ENCODE measurements at regions of chr19 and their contacts with region 1.

Region 1: DNA sequence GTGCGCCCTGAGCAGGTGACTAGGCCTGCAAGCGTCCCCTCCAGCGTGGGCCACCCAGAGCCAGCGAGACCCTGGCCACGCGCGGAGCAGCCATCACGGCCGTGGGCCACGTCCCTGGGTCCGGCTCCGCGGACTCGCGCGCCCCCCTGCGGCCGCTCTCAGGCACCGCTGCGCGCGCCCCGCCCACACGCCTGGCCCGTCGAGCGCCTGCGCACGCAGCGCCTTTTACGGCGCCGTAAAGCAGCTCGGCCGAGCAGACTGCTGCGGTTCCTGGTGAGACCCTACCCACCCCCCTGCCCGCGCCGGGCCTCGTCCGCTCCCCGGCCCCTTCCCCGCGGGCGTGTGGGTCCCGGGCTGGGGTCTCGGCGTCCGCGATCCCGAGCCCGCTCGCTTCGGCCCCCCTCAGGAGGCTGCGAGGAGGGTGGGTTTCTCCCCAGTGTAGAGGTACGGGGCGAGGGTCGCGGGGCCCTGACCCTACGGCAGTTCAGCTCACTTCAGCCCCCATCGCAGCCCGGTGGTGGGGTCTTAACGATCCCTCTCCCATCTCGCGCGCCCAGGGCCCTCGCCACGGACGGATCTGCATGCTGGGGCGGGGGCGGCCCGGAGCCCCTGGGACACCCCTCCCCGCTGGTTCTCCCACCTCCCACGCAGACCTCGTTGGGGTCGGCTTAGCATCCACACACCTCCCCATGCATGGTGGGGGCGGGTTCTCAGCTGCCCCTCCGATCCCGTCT is at the start of gene TRAPPC5:
- DNase-seq: peak; percentile 88
- ATAC-seq: peak; percentile 38
- H3K4me3 Mint-ChIP-seq: peak within 1 kb of the TSS; percentile 92
- H3K27ac Mint-ChIP-seq: peak within 1 kb of the TSS; percentile 95
- H3K4me1 Mint-ChIP-seq: peaks cover 52% of the 10 kb centered on the region
- H3K27me3 Mint-ChIP-seq: peaks cover 27% of the 10 kb centered on the region
- CTCF ChIP-seq: peak; percentile 99
- total RNA-seq, gene TRAPPC5: 85.0 to 85.9 TPM

Region 2: GRCh38 chr19:7618348-7618747 is 62.4 kb before region 1 on chr19:
- CTCF ChIA-PET with region 1: no interaction called
- POLR2A ChIA-PET with region 1: no interaction called
- intact Hi-C with region 1: no loop called
- DNase-seq: no peak
- ATAC-seq: no peak
- H3K4me3 Mint-ChIP-seq: no peak overlapping the region
- H3K27ac Mint-ChIP-seq: no peak overlapping the region
- H3K4me1 Mint-ChIP-seq: no peaks in the 10 kb centered on the region
- H3K27me3 Mint-ChIP-seq: no peaks in the 10 kb centered on the region
- CTCF ChIP-seq: no peak

Region 3: DNA sequence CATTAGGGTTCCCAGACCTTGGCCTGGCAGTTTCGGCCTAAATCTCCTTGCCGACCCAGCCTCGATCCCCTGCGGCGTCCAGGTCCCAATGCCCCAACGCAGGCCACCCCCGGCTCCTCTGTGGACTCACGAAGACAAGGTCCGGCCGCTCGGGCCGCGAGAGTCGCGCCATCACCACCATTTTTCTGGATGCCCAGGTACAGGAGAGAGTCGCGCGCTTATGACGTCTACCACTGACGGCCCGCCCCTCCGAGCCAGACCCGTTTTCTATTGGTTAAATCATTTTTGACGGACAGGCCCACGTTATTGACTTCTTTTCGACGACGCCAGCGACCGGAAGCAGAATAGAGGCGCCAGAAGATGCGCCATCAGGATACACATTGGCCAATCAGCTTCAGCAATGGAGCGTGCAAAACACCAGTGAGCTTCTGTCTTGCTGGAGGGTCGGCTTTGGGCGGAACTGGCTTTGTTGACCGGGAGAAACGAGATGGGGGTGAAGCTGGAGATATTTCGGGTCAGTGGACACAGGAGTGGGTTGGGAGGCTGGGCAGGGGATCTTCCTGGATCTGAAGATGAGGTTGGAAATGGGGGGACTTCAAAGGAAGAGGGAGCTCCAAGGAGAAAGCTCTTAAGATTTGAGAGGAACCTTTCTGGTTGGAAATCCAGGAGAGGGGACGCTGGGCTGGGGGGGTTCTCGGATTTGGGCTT is 51.3 kb before region 1 on chr19 and contains the starts of genes PET100 and XAB2:
- CTCF ChIA-PET with region 1: interaction called, 18 read pairs
- POLR2A ChIA-PET with region 1: interaction called, 6 read pairs
- intact Hi-C with region 1: no loop called
- DNase-seq: peak; percentile 97
- ATAC-seq: peak; percentile 99
- H3K4me3 Mint-ChIP-seq: peak within 1 kb of the TSS; percentile 83
- H3K27ac Mint-ChIP-seq: peak within 1 kb of the TSS; percentile 93
- H3K4me1 Mint-ChIP-seq: peaks cover 31% of the 10 kb centered on the region
- H3K27me3 Mint-ChIP-seq: no peaks in the 10 kb centered on the region
- CTCF ChIP-seq: no peak
- total RNA-seq, gene PET100: 71.8 to 83.3 TPM
- total RNA-seq, gene XAB2: 50.7 to 54.1 TPM

Region 4: DNA sequence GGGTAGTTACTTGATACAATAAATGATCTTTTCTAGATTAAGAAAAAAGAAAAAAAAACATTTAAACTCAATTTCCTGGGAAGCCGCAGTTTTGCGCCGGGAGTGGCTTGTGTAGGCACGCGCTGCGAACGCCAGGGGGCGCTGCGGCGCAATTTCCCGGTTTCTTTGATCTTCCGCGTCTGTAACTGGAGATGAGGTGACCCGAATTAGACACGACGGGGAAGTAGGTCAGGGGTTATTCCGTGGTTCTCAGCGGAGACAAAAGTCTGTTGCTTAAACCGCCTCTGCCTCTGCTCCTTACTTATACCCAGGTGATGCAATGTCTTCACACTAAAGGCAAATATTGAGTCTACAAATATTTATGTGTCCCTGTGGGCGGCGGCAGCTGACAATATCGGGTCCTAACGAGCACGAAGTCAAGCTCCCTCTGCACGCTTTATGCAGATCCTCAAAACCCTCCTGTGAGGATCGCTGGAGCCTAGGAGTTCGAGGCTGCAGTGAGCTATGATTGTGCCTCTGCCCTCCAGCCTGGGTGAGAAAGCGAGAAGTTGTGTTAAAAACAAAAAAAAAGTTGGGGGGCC is 28.6 kb before region 1 on chr19:
- CTCF ChIA-PET with region 1: interaction called, 74 read pairs
- POLR2A ChIA-PET with region 1: interaction called, 4 read pairs
- intact Hi-C with region 1: no loop called
- DNase-seq: peak; percentile 91
- ATAC-seq: peak; percentile 86
- H3K4me3 Mint-ChIP-seq: peak overlapping the region; percentile 59
- H3K27ac Mint-ChIP-seq: peak overlapping the region; percentile 53
- H3K4me1 Mint-ChIP-seq: peaks cover 24% of the 10 kb centered on the region
- H3K27me3 Mint-ChIP-seq: no peaks in the 10 kb centered on the region
- CTCF ChIP-seq: peak; percentile 99

Region 5: DNA sequence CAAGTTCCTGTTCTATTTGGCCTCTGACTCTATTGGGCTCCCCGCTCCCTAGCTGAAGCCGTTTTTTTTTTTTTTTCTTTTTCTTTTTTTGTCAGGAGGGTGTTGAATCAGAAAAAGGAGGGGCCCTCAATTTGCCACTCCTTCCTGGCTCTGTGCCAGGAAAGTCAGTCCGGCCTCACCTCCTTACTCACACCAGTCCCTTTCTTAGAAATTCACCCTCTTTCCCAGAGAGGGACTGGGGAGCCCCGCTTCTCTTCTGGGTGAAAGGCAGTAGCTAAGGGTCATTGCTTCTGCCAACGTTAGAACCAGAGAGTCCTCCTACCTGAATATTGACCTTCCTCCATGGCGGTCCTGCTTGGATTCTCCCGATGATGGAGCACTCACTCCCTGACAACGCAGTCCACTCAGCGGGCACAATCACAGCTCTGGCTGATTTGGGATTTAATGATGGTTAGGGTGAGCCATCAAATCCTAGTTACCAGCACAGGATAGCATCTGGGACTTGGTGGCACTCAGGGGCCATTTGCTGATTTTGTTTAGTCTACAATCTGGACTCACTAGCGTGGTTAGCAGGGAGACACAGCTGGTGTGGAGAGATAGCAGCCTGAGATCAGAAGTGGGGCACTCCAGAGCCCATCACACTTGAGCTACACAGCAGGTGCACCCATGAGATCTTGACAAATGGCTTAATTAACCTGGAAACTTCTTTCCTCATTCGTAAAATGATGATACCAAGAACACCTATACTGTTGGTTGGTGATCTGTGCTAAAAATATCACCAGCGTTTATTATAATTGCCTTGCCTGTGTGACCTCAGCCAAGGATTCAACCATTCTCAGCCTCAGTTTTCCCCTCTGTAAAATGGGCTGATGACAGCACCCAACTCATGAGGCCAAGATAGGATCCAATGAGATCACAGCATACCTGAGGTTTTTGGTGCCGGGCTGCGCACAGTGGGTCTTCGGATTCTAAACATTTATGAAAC is 18.9 kb after region 1 on chr19:
- CTCF ChIA-PET with region 1: interaction called, 28 read pairs
- POLR2A ChIA-PET with region 1: interaction called, 3 read pairs
- intact Hi-C with region 1: no loop called
- DNase-seq: peak; percentile 83
- ATAC-seq: peak; percentile 74
- H3K4me3 Mint-ChIP-seq: peak overlapping the region; percentile 61
- H3K27ac Mint-ChIP-seq: peak overlapping the region; percentile 83
- H3K4me1 Mint-ChIP-seq: peaks cover 28% of the 10 kb centered on the region
- H3K27me3 Mint-ChIP-seq: peaks cover 8% of the 10 kb centered on the region
- CTCF ChIP-seq: no peak

Region 6: DNA sequence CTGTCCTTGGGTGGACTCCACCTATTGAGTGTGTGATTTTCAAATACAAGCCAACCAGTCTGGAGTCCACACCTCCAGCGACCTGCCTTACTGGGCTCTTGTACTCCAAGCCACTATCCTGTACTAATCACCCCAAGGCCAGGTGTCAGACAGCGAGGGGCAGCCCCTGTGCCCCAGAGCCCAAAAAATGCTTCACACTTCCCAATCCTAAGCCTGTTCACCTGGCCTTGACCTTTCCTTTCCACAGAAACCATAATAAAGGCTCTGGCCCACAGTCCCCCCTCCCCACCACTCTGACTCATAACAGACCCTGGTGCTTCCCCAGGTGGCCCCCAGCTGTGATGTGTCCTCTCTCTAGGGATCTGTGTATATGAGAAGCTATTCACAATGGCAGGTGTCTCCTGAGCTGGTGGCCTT is 62.7 kb after region 1 on chr19:
- CTCF ChIA-PET with region 1: interaction called, 10 read pairs
- POLR2A ChIA-PET with region 1: no interaction called
- intact Hi-C with region 1: no loop called
- DNase-seq: peak; percentile 54
- ATAC-seq: peak; percentile 83
- H3K4me3 Mint-ChIP-seq: no peak overlapping the region
- H3K27ac Mint-ChIP-seq: no peak overlapping the region
- H3K4me1 Mint-ChIP-seq: peaks cover 13% of the 10 kb centered on the region
- H3K27me3 Mint-ChIP-seq: peaks cover 29% of the 10 kb centered on the region
- CTCF ChIP-seq: no peak

Region 7: GRCh38 chr19:7799640-7800355 is 119.0 kb after region 1 on chr19:
- CTCF ChIA-PET with region 1: interaction called, 50 read pairs
- POLR2A ChIA-PET with region 1: interaction called, 4 read pairs
- intact Hi-C with region 1: loop called (anchors 5 kb)
- DNase-seq: peak; percentile 67
- ATAC-seq: peak; percentile 68
- H3K4me3 Mint-ChIP-seq: peak overlapping the region; percentile 27
- H3K27ac Mint-ChIP-seq: no peak overlapping the region
- H3K4me1 Mint-ChIP-seq: peaks cover 7% of the 10 kb centered on the region
- H3K27me3 Mint-ChIP-seq: peaks cover 42% of the 10 kb centered on the region
- CTCF ChIP-seq: peak; percentile 82